Dorsolateral prefrontal cortex (tissue), 120 donors: ENCODE measurements at regions of chrX and their contacts with region 1.

Region 1: DNA sequence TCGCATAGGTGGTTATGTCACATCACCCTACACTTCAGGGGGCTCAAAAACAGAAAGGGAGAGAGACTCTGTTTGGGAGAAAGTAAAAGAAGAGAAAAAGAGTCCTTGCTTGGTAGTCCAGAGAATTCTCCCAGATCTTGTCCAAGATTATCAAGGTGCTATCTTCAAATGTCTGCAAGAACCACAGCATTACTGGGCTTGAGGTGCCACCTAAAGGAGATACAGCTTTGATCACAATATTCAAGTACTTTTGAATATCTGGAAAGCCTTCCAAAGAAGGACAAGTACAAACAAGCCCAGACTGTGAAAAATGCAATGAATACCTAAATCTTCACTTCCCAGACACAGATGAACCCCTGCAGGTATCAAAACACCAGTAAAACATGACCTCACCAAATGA is 514.2 kb downstream of the UBE2NL start:
- DNase-seq: no peak
- H3K4me3 ChIP-seq: no peak overlapping the region
- H3K27ac ChIP-seq: no peak overlapping the region
- H3K27me3 ChIP-seq: peaks cover 0 to 21% (median 0%) of the 10 kb centered on the region in 45 donors
- CTCF ChIP-seq: no peak

Region 2: DNA sequence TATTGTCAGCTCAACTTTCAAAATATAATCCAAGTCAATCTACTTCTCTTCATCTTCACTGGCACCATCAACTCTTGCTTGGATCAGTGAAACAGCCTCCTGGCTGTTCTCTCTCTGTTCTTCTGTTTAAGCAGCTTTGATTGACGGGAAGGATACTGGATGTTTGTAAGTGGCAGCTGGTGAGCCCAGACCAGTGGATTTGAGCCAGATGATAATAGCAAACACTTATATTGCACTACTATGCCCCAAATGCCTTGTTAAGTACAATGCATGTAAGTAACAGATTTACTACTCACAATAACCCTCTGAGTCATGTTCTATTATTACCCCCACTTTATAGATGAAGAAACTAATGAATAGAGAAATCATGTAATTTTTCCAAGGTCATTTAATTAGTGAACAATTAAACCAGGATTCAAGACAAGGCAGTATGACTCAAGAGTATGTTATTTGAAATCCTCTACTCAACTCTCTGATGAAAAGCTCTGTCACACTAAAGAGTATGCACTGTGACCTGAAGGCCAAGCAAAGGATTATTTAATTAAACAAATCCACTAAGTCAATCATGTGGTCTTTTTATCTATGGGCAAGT is 925.7 kb before region 1 on chrX:
- intact Hi-C with region 1: no loop called
- DNase-seq: no peak
- H3K4me3 ChIP-seq: no peak overlapping the region
- H3K27ac ChIP-seq: no peak overlapping the region
- H3K27me3 ChIP-seq: peaks cover 0 to 37% (median 8%) of the 10 kb centered on the region in 45 donors
- CTCF ChIP-seq: no peak

Region 3: DNA sequence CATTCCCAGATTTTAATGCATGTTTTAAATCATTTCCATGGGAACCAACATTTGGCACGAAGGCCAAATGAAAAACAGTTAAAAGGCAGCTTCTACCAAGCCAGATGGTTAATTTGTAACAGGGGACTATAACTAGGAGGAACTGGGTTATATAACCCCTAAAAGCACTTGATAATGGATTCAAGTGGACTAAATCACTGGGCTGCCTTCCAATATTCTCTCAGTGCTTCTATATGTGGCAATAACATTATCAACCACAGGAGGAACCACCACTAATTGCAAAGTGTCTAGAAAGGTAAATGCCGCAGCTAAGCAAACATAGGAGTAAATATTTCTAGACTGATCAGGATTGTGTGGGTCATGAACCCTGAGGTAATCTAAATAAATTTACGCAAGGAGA is 122.7 kb before region 1 on chrX:
- intact Hi-C with region 1: no loop called
- DNase-seq: no peak
- H3K4me3 ChIP-seq: no peak overlapping the region
- H3K27ac ChIP-seq: no peak overlapping the region
- H3K27me3 ChIP-seq: peaks cover 0 to 24% (median 0%) of the 10 kb centered on the region in 45 donors
- CTCF ChIP-seq: no peak

Region 4: GRCh38 chrX:144612076-144612475 is 214.0 kb after region 1 on chrX:
- intact Hi-C with region 1: loop called in 1 of 2 experiments (anchors 5 kb)
- DNase-seq: no peak
- H3K4me3 ChIP-seq: no peak overlapping the region
- H3K27ac ChIP-seq: no peak overlapping the region
- H3K27me3 ChIP-seq: peaks cover 0 to 28% (median 0%) of the 10 kb centered on the region in 45 donors
- CTCF ChIP-seq: no peak